Naive thymus-derived CD4-positive, alpha-beta T cell (primary cell): ENCODE measurements at regions of chr15 and their contacts with region 1.

Region 1: DNA sequence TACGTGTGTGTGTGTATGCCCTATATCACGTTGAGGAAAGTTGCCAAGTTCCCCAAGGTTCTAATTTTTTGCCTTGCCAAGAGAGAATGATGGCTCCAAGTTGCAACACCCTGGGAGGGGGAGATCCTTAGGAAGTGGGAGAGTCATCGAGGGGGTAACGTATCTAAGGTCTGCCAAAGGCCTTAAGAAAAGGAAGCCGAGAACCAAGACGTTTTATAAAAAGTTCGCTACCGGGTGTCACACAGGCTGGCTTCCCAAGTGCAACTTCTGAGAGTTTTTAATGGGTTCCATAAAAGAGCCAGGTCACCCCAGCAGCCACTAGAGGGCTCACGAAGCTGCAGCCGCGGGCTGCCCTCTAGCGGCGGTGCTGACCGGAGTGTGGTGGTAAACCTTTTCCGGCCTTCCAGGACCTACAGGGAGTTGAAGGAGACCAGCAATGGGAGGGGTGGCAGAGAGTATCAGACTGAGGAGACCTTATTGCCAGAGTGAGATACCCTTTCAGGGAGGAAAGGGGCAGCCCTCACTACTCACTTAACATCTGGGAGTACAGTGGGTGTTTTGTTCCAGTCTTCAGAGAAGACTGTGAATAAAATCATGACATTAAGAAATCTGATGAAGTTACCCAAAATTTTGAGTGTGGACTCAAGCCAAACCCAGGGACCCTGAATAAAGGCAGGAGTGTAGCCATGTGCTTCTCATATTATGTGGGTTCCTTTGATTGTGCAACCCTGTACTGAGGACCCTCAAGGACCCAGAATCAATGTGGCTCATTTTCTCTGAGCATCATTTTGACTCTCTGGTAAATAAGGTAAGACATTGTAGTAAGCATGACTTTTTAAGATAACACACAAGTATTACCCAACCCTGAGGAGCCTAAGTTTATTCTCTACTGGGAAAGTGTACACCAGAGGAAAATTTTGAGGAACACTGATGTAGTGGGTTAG is 2.5 kb upstream of the RFX7 start:
- DNase-seq: peak; percentile 76 to 89 (median 85)
- ATAC-seq: peak; percentile 90
- H3K4me3 ChIP-seq: peak overlapping the region; percentile 90
- H3K4me3 Mint-ChIP-seq: peak overlapping the region; percentile 75 to 96 (median 88)
- H3K27ac ChIP-seq: peak overlapping the region; percentile 65
- H3K27ac Mint-ChIP-seq: peak overlapping the region; percentile 55 to 99 (median 93)
- H3K4me1 ChIP-seq: peaks cover 11 to 15% of the 10 kb centered on the region in 2 donors
- H3K4me1 Mint-ChIP-seq: peaks cover 14 to 40% (median 35%) of the 10 kb centered on the region in 7 donors
- H3K27me3 ChIP-seq: no peaks in the 10 kb centered on the region
- H3K27me3 Mint-ChIP-seq: peaks cover 0 to 5% (median 0%) of the 10 kb centered on the region in 5 donors

Region 2: DNA sequence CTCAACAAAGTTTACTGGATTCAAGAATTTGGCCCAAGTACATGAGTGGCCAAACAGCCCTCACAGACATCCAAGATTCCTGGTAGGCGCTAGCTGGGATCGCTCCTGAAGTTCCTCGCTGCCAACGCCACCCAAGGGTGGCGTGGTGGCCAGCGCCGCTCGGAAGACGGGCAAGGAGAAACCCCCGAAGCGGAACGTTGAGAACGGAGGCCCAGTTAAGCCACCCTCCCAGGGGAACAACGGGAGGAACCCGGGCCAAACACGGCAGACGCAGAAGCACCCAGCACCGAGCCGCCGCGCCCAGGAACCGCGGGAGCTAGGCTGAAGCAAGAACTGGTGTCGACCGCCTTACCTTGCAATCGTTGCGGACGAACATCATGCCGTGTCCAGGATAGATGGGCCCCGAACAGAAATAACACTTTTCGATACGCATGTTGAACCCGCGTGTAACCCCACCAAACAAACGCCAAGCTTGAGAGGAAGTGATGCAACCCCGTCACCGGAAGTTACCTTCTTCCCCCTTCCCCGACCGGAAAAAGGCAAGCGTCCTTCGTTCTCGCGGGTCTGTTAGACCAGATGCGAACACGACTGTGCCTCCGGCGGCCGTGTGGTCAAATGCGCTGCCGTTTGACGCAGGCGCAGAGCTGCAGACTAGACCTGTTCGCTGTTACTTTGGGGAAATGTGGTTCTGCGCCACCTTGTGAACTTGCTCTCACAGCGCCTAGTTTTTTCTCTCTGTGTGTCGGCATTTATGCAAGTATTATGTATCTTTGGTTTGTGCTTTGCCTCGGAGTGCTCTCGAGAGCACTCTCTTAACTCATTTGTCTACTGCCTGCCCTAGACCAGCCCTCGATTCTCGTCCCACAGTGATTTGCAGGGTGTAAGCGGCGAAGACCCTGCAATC is 1049.4 kb before region 1 on chr15 and contains the start of gene RSL24D1:
- CTCF ChIA-PET with region 1: interaction called, 4 read pairs
- POLR2A ChIA-PET with region 1: no interaction called
- intact Hi-C with region 1: loop called in 1 of 2 experiments (anchors 1 kb)
- DNase-seq: peak; percentile 83 to 98 (median 95)
- ATAC-seq: peak; percentile 98
- H3K4me3 ChIP-seq: peak within 1 kb of the TSS; percentile 93
- H3K4me3 Mint-ChIP-seq: no peak within 1 kb of the TSS
- H3K27ac ChIP-seq: peak within 1 kb of the TSS; percentile 89
- H3K27ac Mint-ChIP-seq: no peak within 1 kb of the TSS
- H3K4me1 ChIP-seq: peaks cover 29 to 39% of the 10 kb centered on the region in 2 donors
- H3K4me1 Mint-ChIP-seq: peaks cover 0 to 24% (median 21%) of the 10 kb centered on the region in 7 donors
- H3K27me3 ChIP-seq: no peaks in the 10 kb centered on the region
- H3K27me3 Mint-ChIP-seq: no peaks in the 10 kb centered on the region
- total RNA-seq, gene RSL24D1: 75.9 to 128 (median 110) TPM

Region 3: GRCh38 chr15:55494931-55495330 is 751.2 kb before region 1 on chr15:
- CTCF ChIA-PET with region 1: no interaction called
- POLR2A ChIA-PET with region 1: no interaction called
- intact Hi-C with region 1: loop called in 1 of 2 experiments (anchors 5 kb)
- DNase-seq: no peak
- ATAC-seq: peak; percentile 55
- H3K4me3 ChIP-seq: no peak overlapping the region
- H3K4me3 Mint-ChIP-seq: peak overlapping the region in 1 of 10 donors; percentile 53
- H3K27ac ChIP-seq: no peak overlapping the region
- H3K27ac Mint-ChIP-seq: peak overlapping the region in 3 of 9 donors; percentile 46 to 81 (median 59)
- H3K4me1 ChIP-seq: no peaks in the 10 kb centered on the region
- H3K4me1 Mint-ChIP-seq: peaks cover 0 to 17% (median 8%) of the 10 kb centered on the region in 7 donors
- H3K27me3 ChIP-seq: no peaks in the 10 kb centered on the region
- H3K27me3 Mint-ChIP-seq: no peaks in the 10 kb centered on the region

Region 4: GRCh38 chr15:55993111-55993803 is 252.9 kb before region 1 on chr15 and contains the start of gene NEDD4:
- CTCF ChIA-PET with region 1: no interaction called
- POLR2A ChIA-PET with region 1: no interaction called
- intact Hi-C with region 1: loop called (anchors 1 to 2 kb)
- DNase-seq: peak; percentile 60 to 80 (median 68)
- ATAC-seq: peak; percentile 93
- H3K4me3 ChIP-seq: peak within 1 kb of the TSS; percentile 66
- H3K4me3 Mint-ChIP-seq: peak within 1 kb of the TSS; percentile 85 to 95 (median 90)
- H3K27ac ChIP-seq: no peak within 1 kb of the TSS
- H3K27ac Mint-ChIP-seq: peak within 1 kb of the TSS; percentile 7 to 92 (median 68)
- H3K4me1 ChIP-seq: no peaks in the 10 kb centered on the region
- H3K4me1 Mint-ChIP-seq: peaks cover 8 to 26% (median 18%) of the 10 kb centered on the region in 7 donors
- H3K27me3 ChIP-seq: no peaks in the 10 kb centered on the region
- H3K27me3 Mint-ChIP-seq: peaks cover 0 to 52% (median 0%) of the 10 kb centered on the region in 5 donors
- total RNA-seq, gene NEDD4: 3.3 to 15.1 (median 5.4) TPM

Region 5: DNA sequence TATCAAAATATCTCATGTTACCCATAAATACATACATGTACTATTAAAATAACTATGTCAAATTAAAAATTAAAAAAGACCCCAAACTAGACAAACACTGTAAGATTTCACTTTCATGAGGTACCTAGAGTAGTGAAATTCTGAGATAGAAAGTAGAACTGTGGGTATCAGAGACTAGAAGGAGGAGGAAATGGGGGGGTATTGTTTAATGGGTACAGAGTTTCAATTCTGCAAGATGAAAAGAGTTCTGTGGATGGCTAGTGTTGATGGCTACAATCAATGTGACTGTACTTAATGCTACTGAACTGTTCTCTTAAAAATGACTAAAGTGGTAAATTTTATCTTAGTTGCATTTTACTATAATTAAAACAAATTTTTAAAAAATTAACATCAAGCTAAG is 39.1 kb before region 1 on chr15:
- CTCF ChIA-PET with region 1: interaction called, 3 read pairs
- POLR2A ChIA-PET with region 1: no interaction called
- intact Hi-C with region 1: loop called (anchors 2 to 5 kb)
- DNase-seq: peak in 1 of 9 donors; percentile 15
- ATAC-seq: no peak
- H3K4me3 ChIP-seq: no peak overlapping the region
- H3K4me3 Mint-ChIP-seq: peak overlapping the region in 7 of 10 donors; percentile 4 to 68 (median 56)
- H3K27ac ChIP-seq: no peak overlapping the region
- H3K27ac Mint-ChIP-seq: peak overlapping the region in 5 of 9 donors; percentile 63 to 95 (median 78)
- H3K4me1 ChIP-seq: peaks cover 10 to 28% of the 10 kb centered on the region in 2 donors
- H3K4me1 Mint-ChIP-seq: peaks cover 58 to 100% (median 85%) of the 10 kb centered on the region in 7 donors
- H3K27me3 ChIP-seq: no peaks in the 10 kb centered on the region
- H3K27me3 Mint-ChIP-seq: no peaks in the 10 kb centered on the region

Region 6: GRCh38 chr15:56464893-56465520 is 218.9 kb after region 1 on chr15 and contains the start of gene MNS1:
- CTCF ChIA-PET with region 1: no interaction called
- POLR2A ChIA-PET with region 1: no interaction called
- intact Hi-C with region 1: loop called in 1 of 2 experiments (anchors 2 kb)
- DNase-seq: peak; percentile 41 to 75 (median 50)
- ATAC-seq: peak; percentile 97
- H3K4me3 ChIP-seq: peak within 1 kb of the TSS; percentile 44
- H3K4me3 Mint-ChIP-seq: peak within 1 kb of the TSS; percentile 65 to 96 (median 86)
- H3K27ac ChIP-seq: no peak within 1 kb of the TSS
- H3K27ac Mint-ChIP-seq: peak within 1 kb of the TSS in 2 of 9 donors; percentile 75 to 87
- H3K4me1 ChIP-seq: peaks cover 0 to 5% of the 10 kb centered on the region in 2 donors
- H3K4me1 Mint-ChIP-seq: peaks cover 12 to 36% (median 27%) of the 10 kb centered on the region in 7 donors
- H3K27me3 ChIP-seq: no peaks in the 10 kb centered on the region
- H3K27me3 Mint-ChIP-seq: peaks cover 15 to 39% (median 22%) of the 10 kb centered on the region in 5 donors
- total RNA-seq, gene MNS1: 0.24 to 0.53 TPM in 2 of 5 experiments, not detected in the others

Region 7: GRCh38 chr15:56835718-56836171 is 589.6 kb after region 1 on chr15:
- CTCF ChIA-PET with region 1: no interaction called
- POLR2A ChIA-PET with region 1: no interaction called
- intact Hi-C with region 1: no loop called
- DNase-seq: no peak
- ATAC-seq: no peak
- H3K4me3 ChIP-seq: no peak overlapping the region
- H3K4me3 Mint-ChIP-seq: no peak overlapping the region
- H3K27ac ChIP-seq: no peak overlapping the region
- H3K27ac Mint-ChIP-seq: no peak overlapping the region
- H3K4me1 ChIP-seq: no peaks in the 10 kb centered on the region
- H3K4me1 Mint-ChIP-seq: peaks cover 0 to 10% (median 5%) of the 10 kb centered on the region in 7 donors
- H3K27me3 ChIP-seq: no peaks in the 10 kb centered on the region
- H3K27me3 Mint-ChIP-seq: peaks cover 0 to 9% (median 0%) of the 10 kb centered on the region in 5 donors

Region 8: DNA sequence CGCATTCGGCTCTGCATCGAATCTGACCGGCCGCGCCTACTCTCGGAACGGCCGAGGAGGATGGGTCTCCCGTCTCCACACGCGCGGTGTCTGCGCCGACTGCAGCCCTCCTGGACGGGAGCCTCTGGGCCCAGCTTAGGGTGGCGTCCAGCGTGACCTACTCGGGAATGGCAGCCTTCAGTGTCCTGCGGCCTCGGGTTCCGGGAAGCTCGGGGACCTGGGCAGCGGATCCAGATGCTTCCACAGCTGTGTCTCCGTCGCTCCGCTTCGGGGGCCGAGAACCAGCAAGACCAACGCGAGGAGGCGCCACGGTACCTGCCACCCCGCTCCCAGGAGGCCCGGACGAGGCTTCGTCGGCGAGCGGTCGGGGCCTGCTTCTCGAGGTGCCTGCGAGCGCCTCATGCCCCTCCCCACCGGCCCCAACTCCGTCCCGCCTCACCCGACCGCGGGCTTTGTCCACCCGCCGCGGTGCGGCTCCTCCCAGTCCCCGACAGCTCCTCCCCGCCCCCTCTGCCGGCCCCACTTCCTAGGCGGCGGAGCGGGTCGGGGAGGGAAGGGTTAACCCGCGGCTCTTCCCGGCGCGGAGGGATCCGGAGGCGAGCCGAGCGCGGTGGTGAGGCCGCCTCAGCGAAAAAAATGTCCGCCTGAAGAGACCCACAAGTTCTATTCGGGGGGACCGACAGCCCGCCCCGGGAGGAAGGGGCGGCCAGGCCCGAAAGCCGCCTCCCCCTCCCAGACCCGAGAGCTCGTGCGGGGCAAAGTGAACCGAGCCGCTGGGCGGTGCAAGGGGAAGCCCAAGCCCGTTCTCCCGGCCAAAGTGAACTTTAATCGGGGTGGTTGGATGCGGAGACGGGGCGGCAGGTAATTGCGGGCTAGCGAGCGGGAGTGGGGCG is 672.1 kb after region 1 on chr15 and contains the start of gene TCF12:
- CTCF ChIA-PET with region 1: no interaction called
- POLR2A ChIA-PET with region 1: no interaction called
- intact Hi-C with region 1: loop called in 1 of 2 experiments (anchors 5 kb)
- DNase-seq: peak; percentile 86 to 96 (median 92)
- ATAC-seq: peak; percentile 92
- H3K4me3 ChIP-seq: peak within 1 kb of the TSS; percentile 91
- H3K4me3 Mint-ChIP-seq: peak within 1 kb of the TSS; percentile 82 to 94 (median 90)
- H3K27ac ChIP-seq: peak within 1 kb of the TSS; percentile 86
- H3K27ac Mint-ChIP-seq: peak within 1 kb of the TSS; percentile 73 to 91 (median 84)
- H3K4me1 ChIP-seq: peaks cover 14 to 32% of the 10 kb centered on the region in 2 donors
- H3K4me1 Mint-ChIP-seq: peaks cover 18 to 55% (median 44%) of the 10 kb centered on the region in 7 donors
- H3K27me3 ChIP-seq: no peaks in the 10 kb centered on the region
- H3K27me3 Mint-ChIP-seq: no peaks in the 10 kb centered on the region
- total RNA-seq, gene TCF12: 71.5 to 99.4 (median 84.0) TPM